Activated CD8-positive, alpha-beta T cell treated with anti-CD3 and anti-CD28 coated beads for 36 hours (primary cell): ENCODE measurements at regions of chr2 and their contacts with region 1.

Region 1: DNA sequence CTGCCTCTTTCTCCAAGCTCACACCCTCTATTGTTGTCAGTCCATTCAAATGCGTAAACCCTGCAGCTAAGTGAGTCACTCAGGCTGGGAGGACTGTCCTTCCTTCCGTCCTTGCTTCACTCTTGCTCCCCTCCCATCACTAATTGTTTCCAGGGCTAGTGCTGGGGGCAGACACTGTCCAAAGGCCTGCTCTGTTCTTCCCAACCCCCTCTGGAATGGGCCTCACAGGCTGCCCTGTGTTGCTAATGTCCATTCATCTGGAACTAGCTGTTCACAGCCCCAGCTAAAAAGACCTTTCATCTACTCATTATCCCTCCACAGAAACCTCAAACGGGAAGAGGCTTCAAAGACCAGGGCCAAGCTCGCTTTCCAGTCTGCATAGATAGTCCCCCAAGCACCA is 31.9 kb upstream of the NRP2 start:
- DNase-seq: no peak
- ATAC-seq: no peak
- H3K4me3 Mint-ChIP-seq: no peak overlapping the region
- H3K27ac Mint-ChIP-seq: no peak overlapping the region
- H3K4me1 Mint-ChIP-seq: no peaks in the 10 kb centered on the region
- H3K27me3 Mint-ChIP-seq: no peaks in the 10 kb centered on the region
- CTCF ChIP-seq: no peak

Region 2: GRCh38 chr2:204871231-204871953 is 779.1 kb before region 1 on chr2:
- CTCF ChIA-PET with region 1: no interaction called
- POLR2A ChIA-PET with region 1: no interaction called
- intact Hi-C with region 1: loop called (anchors 10 kb)
- DNase-seq: no peak
- ATAC-seq: no peak
- H3K4me3 Mint-ChIP-seq: no peak overlapping the region
- H3K27ac Mint-ChIP-seq: no peak overlapping the region
- H3K4me1 Mint-ChIP-seq: peaks cover 11% of the 10 kb centered on the region
- H3K27me3 Mint-ChIP-seq: no peaks in the 10 kb centered on the region
- CTCF ChIP-seq: peak; percentile 37